ENCODE measurements at regions of chr3 and their contacts with region 1.

Region 1: GRCh38 chr3:156135921-156136638 is 15.7 kb downstream of the KCNAB1 start:
- DNase-seq: no peak

Region 2: DNA sequence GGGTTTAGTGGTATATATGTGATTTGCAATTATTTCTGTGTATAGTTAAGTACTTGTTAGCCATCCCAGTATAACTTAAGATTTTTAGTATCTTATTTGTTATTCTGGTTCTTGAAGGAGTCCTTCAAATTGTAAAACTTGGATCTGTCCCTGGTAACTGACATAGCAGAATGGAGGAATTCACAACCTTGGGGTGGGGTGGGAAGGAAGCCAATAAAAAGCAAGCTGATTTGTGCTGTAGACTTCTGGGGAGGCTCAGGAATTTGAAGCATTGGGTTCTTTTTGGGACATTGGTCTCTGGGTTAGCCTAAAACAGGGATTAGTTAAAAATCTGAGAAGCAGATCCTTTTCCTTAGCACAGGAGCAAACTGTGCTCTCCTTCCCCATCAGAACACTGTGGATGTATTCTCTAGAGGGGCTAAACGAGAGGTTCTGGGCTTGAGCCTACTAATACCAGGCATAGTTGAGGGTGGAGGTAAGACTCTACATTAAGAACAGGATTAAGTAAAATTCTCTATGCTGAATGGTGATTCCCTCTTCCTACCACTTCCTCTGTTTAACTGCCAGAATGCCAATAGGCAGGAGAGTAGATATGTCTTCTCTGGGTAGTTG is 223.4 kb before region 1 on chr3:
- in situ Hi-C with region 1: no loop called
- DNase-seq: no peak

Region 3: GRCh38 chr3:156253150-156253549 is 117.1 kb after region 1 on chr3:
- in situ Hi-C with region 1: no loop called
- DNase-seq: no peak

Region 4: GRCh38 chr3:156304406-156304805 is 168.3 kb after region 1 on chr3:
- in situ Hi-C with region 1: no loop called
- DNase-seq: no peak

Region 5: DNA sequence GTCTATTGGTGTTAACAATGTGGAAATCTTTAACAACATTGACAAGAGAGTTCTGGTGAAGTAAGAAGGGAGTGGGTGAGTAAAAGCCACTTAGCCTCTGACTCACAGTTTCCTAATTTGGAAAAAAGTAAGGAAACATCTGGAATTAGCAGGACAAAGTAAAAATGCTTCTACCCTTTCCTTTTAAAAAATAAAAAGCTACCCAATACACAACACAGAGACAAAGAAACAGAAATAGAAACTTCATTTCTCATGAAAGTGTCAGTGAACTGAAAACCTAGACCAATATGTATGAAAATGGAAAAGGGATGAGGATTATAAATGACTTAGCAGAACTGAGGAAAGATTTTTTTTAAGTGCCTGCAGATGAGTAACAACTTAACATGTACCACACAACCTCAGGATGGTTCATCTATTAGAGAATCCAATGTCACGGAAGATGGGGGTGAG is 353.4 kb after region 1 on chr3:
- in situ Hi-C with region 1: no loop called
- DNase-seq: no peak

Region 6: DNA sequence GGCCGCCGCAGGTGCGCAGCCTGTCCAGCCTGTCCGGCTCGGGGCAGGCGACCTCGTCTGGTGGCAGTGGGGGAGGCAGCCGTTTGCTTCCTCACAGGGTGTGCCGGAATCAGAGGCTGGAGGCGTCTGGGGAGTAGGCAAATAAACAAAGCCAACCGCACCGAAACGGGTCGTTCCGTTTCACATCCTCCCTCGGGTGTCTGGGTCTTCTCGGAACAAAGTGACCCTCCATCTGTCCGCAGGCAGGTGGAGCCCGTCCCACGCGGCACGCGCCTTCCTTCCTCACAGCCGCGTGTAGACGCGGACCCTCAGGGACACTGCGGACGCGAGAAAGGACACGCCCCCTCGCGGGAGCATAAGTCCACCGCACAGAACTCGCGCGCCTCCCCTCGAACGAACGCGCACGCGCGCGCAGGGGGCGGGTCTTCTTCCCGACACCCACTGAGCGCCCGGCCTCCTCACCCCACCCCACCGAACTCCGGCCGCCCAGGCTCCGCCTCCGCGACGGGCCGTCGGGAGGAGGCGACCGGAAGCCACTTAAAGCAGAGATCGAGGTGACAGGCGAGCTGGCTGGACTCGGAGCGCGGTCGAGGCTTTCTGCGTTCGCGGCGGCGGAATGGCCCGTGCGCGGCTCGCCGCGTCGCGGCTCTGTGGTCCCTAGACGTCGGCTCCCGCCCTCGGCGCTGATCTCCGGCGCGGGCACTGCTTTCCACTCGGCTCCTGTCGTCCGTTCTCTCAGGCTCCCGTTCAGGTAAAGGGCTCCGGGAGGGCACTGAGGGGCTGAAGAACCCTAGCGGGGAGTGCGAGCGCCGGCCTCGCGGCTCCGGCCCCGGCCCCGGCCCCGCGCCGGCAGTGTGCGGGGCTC is 538.2 kb after region 1 on chr3 and contains the start of gene TIPARP:
- in situ Hi-C with region 1: loop called (anchors 25 kb)
- DNase-seq: peak; percentile 99

Measured in KBM-7 (cell line).